SK-N-SH (cell line): ENCODE measurements at regions of chr1 and their contacts with region 1.

Region 1: GRCh38 chr1:114282751-114283403 is 129.2 kb upstream of the SYT6 start:
- DNase-seq: peak; percentile 77
- H3K4me3 ChIP-seq: no peak overlapping the region
- H3K27ac ChIP-seq: no peak overlapping the region
- H3K4me1 ChIP-seq: peaks cover 0 to 10% of the 10 kb centered on the region in 2 experiments; a peak in 1 of 4 replicates
- H3K27me3 ChIP-seq: 0 out of 2 replicates have a peak, but pooled peaks cover 4% of the 10 kb centered on the region
- CTCF ChIP-seq: peak; percentile 93
- EP300 ChIP-seq: no peak
- RAD21 ChIP-seq: peak; percentile 88

Region 2: GRCh38 chr1:114033216-114033706 is 249.6 kb before region 1 on chr1:
- CTCF ChIA-PET with region 1: interaction called, 17 read pairs
- POLR2A ChIA-PET with region 1: no interaction called
- DNase-seq: peak; percentile 41
- H3K4me3 ChIP-seq: peak overlapping the region in 1 of 2 experiments; percentile 37; a peak in 1 of 4 replicates
- H3K27ac ChIP-seq: peak overlapping the region in 1 of 2 experiments; percentile 78; a peak in 2 of 4 replicates
- H3K4me1 ChIP-seq: peaks cover 0 to 21% of the 10 kb centered on the region in 2 experiments; a peak in 2 of 4 replicates
- H3K27me3 ChIP-seq: no peaks in the 10 kb centered on the region
- CTCF ChIP-seq: peak; percentile 63
- EP300 ChIP-seq: no peak
- RAD21 ChIP-seq: peak; percentile 46

Region 3: GRCh38 chr1:114152508-114153260 is 130.2 kb before region 1 on chr1:
- CTCF ChIA-PET with region 1: interaction called, 14 read pairs
- POLR2A ChIA-PET with region 1: no interaction called
- DNase-seq: peak; percentile 87
- H3K4me3 ChIP-seq: peak overlapping the region in 1 of 2 experiments; percentile 25; a peak in 2 of 4 replicates
- H3K27ac ChIP-seq: no peak overlapping the region
- H3K4me1 ChIP-seq: peaks cover 6 to 9% of the 10 kb centered on the region in 2 experiments; a peak in 2 of 4 replicates
- H3K27me3 ChIP-seq: peaks cover 86% of the 10 kb centered on the region
- CTCF ChIP-seq: no peak
- EP300 ChIP-seq: no peak
- RAD21 ChIP-seq: no peak

Region 4: GRCh38 chr1:114224196-114224907 is 58.5 kb before region 1 on chr1:
- CTCF ChIA-PET with region 1: no interaction called
- POLR2A ChIA-PET with region 1: no interaction called
- DNase-seq: no peak
- H3K4me3 ChIP-seq: no peak overlapping the region
- H3K27ac ChIP-seq: no peak overlapping the region; a peak in 1 of 4 replicates
- H3K4me1 ChIP-seq: peaks cover 0 to 8% of the 10 kb centered on the region in 2 experiments; a peak in 1 of 4 replicates
- H3K27me3 ChIP-seq: no peaks in the 10 kb centered on the region; the same call in 1 of the 2 replicates
- CTCF ChIP-seq: no peak
- EP300 ChIP-seq: no peak
- RAD21 ChIP-seq: no peak

Region 5: GRCh38 chr1:114263343-114263742 is 19.5 kb before region 1 on chr1:
- CTCF ChIA-PET with region 1: interaction called, 87 read pairs
- POLR2A ChIA-PET with region 1: no interaction called
- DNase-seq: no peak
- H3K4me3 ChIP-seq: no peak overlapping the region
- H3K27ac ChIP-seq: no peak overlapping the region
- H3K4me1 ChIP-seq: no peaks in the 10 kb centered on the region
- H3K27me3 ChIP-seq: no peaks in the 10 kb centered on the region; the same call in 1 of the 2 replicates
- CTCF ChIP-seq: no peak
- EP300 ChIP-seq: no peak
- RAD21 ChIP-seq: no peak

Region 6: DNA sequence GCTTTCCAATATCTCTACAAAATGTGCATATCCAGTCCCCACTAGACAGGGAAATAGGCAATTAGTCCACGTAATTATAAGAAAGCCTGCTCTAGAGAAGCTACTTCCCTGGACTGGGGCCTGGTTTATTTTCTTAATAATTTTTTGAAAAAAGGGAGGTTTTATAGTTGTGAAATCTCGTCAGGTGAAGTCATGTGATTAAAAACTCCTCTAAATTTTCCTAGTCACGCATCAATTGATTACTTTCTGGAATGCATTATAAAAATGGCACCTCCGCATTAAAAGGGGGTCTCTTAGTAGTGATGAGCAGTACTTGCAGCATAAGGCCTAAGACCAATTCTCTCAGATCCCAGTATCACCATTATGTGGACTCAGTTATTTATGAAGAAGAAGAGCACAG is 120.0 kb after region 1 on chr1:
- CTCF ChIA-PET with region 1: no interaction called
- POLR2A ChIA-PET with region 1: no interaction called
- DNase-seq: no peak
- H3K4me3 ChIP-seq: no peak overlapping the region
- H3K27ac ChIP-seq: no peak overlapping the region
- H3K4me1 ChIP-seq: no peaks in the 10 kb centered on the region
- H3K27me3 ChIP-seq: no peaks in the 10 kb centered on the region
- CTCF ChIP-seq: no peak
- EP300 ChIP-seq: no peak
- RAD21 ChIP-seq: no peak

Region 7: DNA sequence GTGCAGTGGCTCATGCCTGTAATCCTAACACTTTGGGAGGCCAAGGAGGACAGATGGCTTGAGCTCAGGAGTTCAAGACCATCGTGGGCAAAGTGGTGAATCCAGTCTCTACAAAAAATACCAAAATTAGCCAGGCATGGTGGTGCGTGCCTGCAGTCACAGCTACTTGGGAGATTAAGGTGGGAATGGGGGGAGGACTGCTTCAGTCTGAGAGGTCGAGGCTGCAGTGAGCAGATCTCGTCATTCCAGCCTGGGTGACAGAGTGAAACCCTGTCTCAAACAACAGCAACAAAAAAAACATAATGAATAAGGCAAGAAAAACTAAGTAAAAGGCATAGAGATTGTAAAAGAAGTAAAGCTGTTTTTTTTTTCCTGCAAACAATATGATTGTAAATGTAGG is 353.5 kb after region 1 on chr1:
- CTCF ChIA-PET with region 1: no interaction called
- POLR2A ChIA-PET with region 1: no interaction called
- DNase-seq: no peak
- H3K4me3 ChIP-seq: no peak overlapping the region
- H3K27ac ChIP-seq: no peak overlapping the region
- H3K4me1 ChIP-seq: no peaks in the 10 kb centered on the region
- H3K27me3 ChIP-seq: peaks cover 22% of the 10 kb centered on the region; the same call in 1 of the 2 replicates
- CTCF ChIP-seq: no peak
- EP300 ChIP-seq: no peak
- RAD21 ChIP-seq: no peak